ENCODE measurements at regions of chr2 and their contacts with region 1.

Region 1: DNA sequence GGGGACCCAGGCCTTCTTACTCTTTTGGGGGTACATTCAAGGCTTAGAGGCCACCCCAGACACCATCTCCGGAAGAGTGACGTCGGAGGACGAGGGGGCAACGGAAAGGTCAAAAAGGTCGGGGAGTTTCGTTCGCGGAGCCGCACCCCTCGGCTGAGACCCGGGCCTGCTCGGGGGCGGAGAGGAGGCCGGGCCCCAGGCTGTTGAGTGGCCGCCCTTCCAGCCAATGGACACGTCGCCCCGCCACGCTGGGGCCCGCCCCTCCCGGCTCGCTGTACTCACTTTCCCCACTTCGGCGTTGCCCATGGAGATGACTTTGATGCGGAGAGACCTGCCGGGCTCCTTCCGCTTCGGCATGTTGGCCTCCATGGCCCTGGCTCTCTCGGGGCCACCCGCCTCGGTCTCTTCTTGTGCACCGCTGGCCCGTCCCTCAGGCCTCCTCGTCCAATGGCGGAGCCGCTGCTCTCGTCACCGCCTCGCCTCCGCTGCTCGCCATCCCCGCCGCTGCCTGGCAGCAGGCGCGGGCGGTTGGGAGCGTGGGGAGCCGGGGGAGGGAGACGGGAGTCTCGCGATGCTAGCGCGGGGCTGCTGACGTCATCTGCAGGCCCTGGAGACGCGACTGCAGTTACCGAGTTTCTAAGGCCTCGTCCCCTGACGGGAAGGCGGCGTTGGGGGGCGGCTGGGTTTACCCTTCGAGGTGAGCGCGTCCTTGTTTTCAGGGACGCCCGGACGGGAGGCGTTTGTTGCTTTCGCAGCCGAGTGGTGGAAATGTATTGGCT is at the start of gene DNAJC27:
- DNase-seq: peak; percentile 98
- H3K4me3 Mint-ChIP-seq: peak within 1 kb of the TSS; percentile 96
- H3K27ac Mint-ChIP-seq: peak within 1 kb of the TSS; percentile 100
- H3K4me1 Mint-ChIP-seq: peaks cover 6% of the 10 kb centered on the region
- H3K27me3 Mint-ChIP-seq: no peaks in the 10 kb centered on the region
- total RNA-seq, gene DNAJC27: 5.5 to 6.9 TPM

Region 2: GRCh38 chr2:24490674-24491625 is 480.8 kb before region 1 on chr2 and contains the start of gene NCOA1:
- CTCF ChIA-PET with region 1: no interaction called
- POLR2A ChIA-PET with region 1: no interaction called
- intact Hi-C with region 1: loop called (anchors 5 kb)
- DNase-seq: peak; percentile 95
- H3K4me3 Mint-ChIP-seq: peak within 1 kb of the TSS; percentile 83
- H3K27ac Mint-ChIP-seq: peak within 1 kb of the TSS; percentile 91
- H3K4me1 Mint-ChIP-seq: peaks cover 48% of the 10 kb centered on the region
- H3K27me3 Mint-ChIP-seq: no peaks in the 10 kb centered on the region
- total RNA-seq, gene NCOA1: 21.3 to 24.0 TPM

Region 3: GRCh38 chr2:24920098-24920808 is 51.5 kb before region 1 on chr2 and contains the start of gene ADCY3:
- CTCF ChIA-PET with region 1: interaction called, 7 read pairs
- POLR2A ChIA-PET with region 1: interaction called, 3 read pairs
- intact Hi-C with region 1: loop called (anchors 1 kb)
- DNase-seq: peak; percentile 77
- H3K4me3 Mint-ChIP-seq: peak within 1 kb of the TSS; percentile 97
- H3K27ac Mint-ChIP-seq: peak within 1 kb of the TSS; percentile 94
- H3K4me1 Mint-ChIP-seq: peaks cover 39% of the 10 kb centered on the region
- H3K27me3 Mint-ChIP-seq: no peaks in the 10 kb centered on the region
- total RNA-seq, gene ADCY3: 68.7 to 71.7 TPM

Region 4: GRCh38 chr2:25041928-25042320 is 70.2 kb after region 1 on chr2 and contains the start of gene EFR3B:
- CTCF ChIA-PET with region 1: interaction called, 12 read pairs
- POLR2A ChIA-PET with region 1: no interaction called
- intact Hi-C with region 1: loop called (anchors 1 kb)
- DNase-seq: peak; percentile 93
- H3K4me3 Mint-ChIP-seq: peak within 1 kb of the TSS; percentile 73
- H3K27ac Mint-ChIP-seq: no peak within 1 kb of the TSS
- H3K4me1 Mint-ChIP-seq: peaks cover 30% of the 10 kb centered on the region
- H3K27me3 Mint-ChIP-seq: peaks cover 39% of the 10 kb centered on the region
- total RNA-seq, gene EFR3B: 1.5 TPM

Region 5: DNA sequence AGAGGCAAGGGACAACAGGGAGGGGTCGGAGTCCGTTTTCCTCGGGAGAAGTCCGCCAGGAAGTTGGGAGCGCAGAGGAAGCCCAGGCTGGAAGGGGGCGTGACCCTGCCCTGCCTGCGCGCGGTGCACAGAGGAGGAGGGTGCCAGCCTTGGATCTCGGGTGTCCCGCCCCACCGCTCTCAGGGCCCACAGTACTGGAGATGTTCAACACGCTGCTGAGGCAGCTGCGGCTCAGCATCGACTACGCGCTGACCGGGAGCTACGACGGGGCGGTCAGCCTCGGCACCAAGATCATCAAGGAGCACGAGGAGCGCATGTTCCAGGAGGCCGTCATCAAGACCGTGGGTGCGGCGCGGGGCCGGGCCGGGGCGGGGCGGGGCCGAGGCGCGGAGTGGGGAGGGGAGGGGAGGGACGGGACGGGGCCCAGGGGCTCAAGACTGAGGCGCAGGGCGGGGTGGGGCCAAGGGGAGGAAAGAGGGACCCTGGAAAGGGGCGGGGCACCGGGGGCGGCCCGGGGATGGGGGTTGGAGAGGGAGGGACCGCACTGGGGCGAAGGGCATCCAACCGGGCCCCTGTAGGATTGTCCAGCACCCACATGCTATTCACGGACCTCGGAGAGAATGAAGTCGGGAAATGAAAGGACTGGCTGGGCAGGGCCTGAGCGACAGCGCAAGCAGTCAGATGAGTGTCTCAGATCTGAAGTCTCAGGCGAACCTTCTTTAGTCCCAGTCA is 160.0 kb after region 1 on chr2:
- CTCF ChIA-PET with region 1: interaction called, 271 read pairs
- POLR2A ChIA-PET with region 1: no interaction called
- intact Hi-C with region 1: loop called (anchors 1 kb)
- DNase-seq: peak; percentile 23
- H3K4me3 Mint-ChIP-seq: peak overlapping the region; percentile 48
- H3K27ac Mint-ChIP-seq: no peak overlapping the region
- H3K4me1 Mint-ChIP-seq: peaks cover 12% of the 10 kb centered on the region
- H3K27me3 Mint-ChIP-seq: peaks cover 50% of the 10 kb centered on the region

Region 6: DNA sequence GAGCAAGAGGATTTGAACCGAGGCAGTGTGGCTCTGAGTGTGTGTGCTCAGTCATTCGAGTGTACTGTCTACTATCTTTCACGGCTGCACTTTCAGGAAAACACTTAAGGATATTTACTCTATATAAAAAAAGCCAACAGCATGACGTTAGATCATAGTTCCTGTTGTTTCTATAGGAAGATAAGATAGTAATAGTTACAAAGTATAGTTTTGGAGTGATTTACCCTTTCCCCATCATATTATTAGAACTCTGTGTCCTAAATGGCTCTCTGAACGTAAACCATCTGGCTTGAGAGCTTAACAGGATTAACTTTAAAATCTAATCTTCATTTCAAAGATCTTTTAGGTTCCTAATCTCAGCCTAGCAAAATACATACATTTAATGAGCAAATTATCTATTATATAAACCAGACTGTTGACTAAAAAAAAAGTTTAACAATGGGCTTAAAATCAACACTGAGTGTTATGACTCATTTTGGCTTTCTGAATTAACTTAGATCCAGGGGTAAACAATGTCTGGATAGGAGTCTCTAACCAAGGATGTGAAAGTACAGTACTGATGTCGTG is 520.3 kb after region 1 on chr2:
- CTCF ChIA-PET with region 1: no interaction called
- POLR2A ChIA-PET with region 1: no interaction called
- intact Hi-C with region 1: no loop called
- DNase-seq: no peak
- H3K4me3 Mint-ChIP-seq: no peak overlapping the region
- H3K27ac Mint-ChIP-seq: no peak overlapping the region
- H3K4me1 Mint-ChIP-seq: peaks cover 4% of the 10 kb centered on the region
- H3K27me3 Mint-ChIP-seq: no peaks in the 10 kb centered on the region